ENCODE measurements at regions of chr17 and their contacts with region 1.

Region 1: DNA sequence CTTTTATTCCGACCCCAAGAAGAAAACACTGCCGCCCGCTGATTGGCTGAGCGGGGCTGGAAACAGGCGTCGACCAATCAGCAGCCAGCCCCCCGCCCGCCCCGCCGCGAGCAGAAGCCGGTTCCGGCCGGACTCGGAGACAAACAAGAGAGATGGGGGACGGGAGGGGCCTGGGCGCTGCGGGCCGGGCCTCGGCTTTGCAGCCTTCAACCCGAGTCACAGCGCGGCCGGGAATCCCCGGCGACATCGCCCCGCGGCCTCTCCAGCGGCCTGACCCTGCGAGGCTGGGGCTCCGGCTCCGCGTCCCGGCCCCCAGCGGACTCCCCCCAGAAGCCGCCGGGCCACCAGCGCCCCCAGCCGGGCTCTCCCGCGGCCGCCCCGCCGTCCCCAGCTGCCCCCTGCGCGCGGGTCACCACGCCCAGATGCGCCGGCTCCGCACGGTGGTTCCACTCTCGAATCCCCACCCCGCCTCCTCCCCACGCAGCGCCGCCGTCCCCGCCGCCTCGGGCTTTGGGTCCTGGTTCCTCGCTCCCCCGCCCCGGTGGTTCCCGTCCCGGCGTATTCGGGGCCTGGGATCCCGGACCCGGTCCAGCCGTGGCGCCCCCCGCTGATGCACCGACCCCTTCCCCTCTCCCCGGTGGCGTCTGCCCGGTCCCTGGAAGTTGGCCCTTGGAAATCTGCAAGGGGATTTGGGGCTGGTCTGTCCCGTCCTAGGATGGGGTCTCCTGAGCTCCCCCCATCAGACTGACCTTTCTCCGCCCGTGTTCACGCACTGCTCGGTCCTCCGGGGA is 417 bp upstream of the SLC43A2 start:
- DNase-seq: peak; percentile 85
- ATAC-seq: peak; percentile 81
- H3K4me3 Mint-ChIP-seq: peak overlapping the region; percentile 82
- H3K27ac Mint-ChIP-seq: peak overlapping the region; percentile 80
- H3K4me1 Mint-ChIP-seq: peaks cover 13% of the 10 kb centered on the region
- H3K27me3 Mint-ChIP-seq: peaks cover 34% of the 10 kb centered on the region

Region 2: GRCh38 chr17:1648963-1649843 is 20.2 kb after region 1 on chr17:
- POLR2A ChIA-PET with region 1: interaction called, 16 read pairs
- DNase-seq: peak; percentile 98
- ATAC-seq: peak; percentile 74
- H3K4me3 Mint-ChIP-seq: peak overlapping the region; percentile 80
- H3K27ac Mint-ChIP-seq: peak overlapping the region; percentile 64
- H3K4me1 Mint-ChIP-seq: peaks cover 24% of the 10 kb centered on the region
- H3K27me3 Mint-ChIP-seq: no peaks in the 10 kb centered on the region